Adrenal gland (tissue), 19 donors: ENCODE measurements at regions of chr2 and their contacts with region 1.

Region 1: GRCh38 chr2:9333591-9334171 is 89.6 kb downstream of the ITGB1BP1 start:
- DNase-seq: peak; percentile 58 to 82 (median 72)
- H3K4me3 ChIP-seq: no peak overlapping the region
- H3K27ac ChIP-seq: no peak overlapping the region
- H3K4me1 ChIP-seq: no peaks in the 10 kb centered on the region
- H3K27me3 ChIP-seq: no peaks in the 10 kb centered on the region
- CTCF ChIP-seq: peak; percentile 41 to 74 (median 66)
- POLR2A ChIP-seq: no peak

Region 2: GRCh38 chr2:9142551-9143263 is 191.0 kb before region 1 on chr2:
- intact Hi-C with region 1: loop called (anchors 5 kb)
- DNase-seq: peak; percentile 76 to 88 (median 83)
- H3K4me3 ChIP-seq: peak overlapping the region in 1 of 4 donors; percentile 18
- H3K27ac ChIP-seq: peak overlapping the region in 1 of 5 donors; percentile 24
- H3K4me1 ChIP-seq: peaks cover 0 to 6% of the 10 kb centered on the region in 2 donors
- H3K27me3 ChIP-seq: no peaks in the 10 kb centered on the region
- CTCF ChIP-seq: peak; percentile 94 to 100 (median 98)
- POLR2A ChIP-seq: no peak

Region 3: DNA sequence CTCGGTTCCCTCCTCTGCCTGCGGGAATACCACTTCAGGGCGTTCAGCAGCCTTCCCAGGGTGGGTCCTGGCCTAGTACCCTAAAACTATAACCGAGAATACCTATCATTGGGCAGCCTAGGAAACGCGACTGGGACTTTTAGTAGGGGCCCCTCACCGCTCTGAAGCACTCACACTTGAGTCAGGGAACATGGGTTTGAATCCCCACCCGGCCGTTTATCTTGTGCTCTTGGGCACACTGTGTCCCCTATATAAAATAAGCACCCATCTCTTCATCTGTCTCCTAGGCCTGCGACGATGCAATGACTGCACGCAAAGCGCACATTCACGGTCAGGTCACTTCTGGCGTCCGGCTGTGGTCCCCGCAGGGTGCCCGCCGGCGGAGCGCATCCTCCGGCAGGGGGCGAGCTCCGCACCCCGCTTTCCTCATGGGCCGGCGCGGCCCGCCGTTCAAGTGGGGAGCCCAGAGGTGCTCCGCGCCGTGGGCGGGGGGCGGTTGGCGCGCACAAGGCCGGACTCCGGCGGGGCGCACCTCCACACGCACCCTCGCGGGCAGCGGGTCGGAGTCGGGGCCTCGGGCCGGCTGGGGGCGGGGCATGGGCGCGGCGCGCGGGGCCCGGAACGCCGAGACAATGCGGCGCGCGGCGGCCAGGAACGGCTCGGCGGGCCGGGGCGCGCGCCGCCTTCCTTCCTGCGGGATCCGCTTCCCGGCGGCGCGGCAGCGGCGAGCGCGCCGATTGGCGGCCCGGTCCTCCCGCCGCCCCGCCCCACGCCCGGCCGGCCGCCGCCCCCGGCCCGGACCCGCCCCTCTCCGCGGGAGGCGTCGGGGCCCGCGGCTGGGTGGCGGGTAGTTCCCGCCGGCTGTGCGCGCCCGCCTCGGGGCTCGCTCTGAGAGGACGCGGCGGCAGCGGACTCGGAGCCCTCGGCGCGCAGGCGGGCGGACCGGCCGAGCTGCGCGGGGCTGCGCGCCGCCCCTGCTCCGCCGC is 127.4 kb before region 1 on chr2 and contains the start of gene ASAP2:
- intact Hi-C with region 1: loop called (anchors 10 kb)
- DNase-seq: peak; percentile 43 to 68 (median 61)
- H3K4me3 ChIP-seq: peak within 1 kb of the TSS in 3 of 4 donors; percentile 11 to 78 (median 32)
- H3K27ac ChIP-seq: peak within 1 kb of the TSS in 3 of 5 donors; percentile 19 to 91 (median 68)
- H3K4me1 ChIP-seq: peaks cover 5 to 7% of the 10 kb centered on the region in 2 donors
- H3K27me3 ChIP-seq: no peaks in the 10 kb centered on the region
- CTCF ChIP-seq: peak; percentile 24 to 78 (median 62)
- POLR2A ChIP-seq: peak in 1 of 2 donors; percentile 25
- total RNA-seq, gene ASAP2: 5.4 to 12.9 (median 7.7) TPM

Region 4: GRCh38 chr2:9251154-9252001 is 82.3 kb before region 1 on chr2:
- intact Hi-C with region 1: no loop called
- DNase-seq: peak in 2 of 7 donors; percentile 37 to 45
- H3K4me3 ChIP-seq: no peak overlapping the region
- H3K27ac ChIP-seq: peak overlapping the region in 2 of 5 donors; percentile 45 to 71
- H3K4me1 ChIP-seq: peaks cover 5 to 29% of the 10 kb centered on the region in 2 donors
- H3K27me3 ChIP-seq: no peaks in the 10 kb centered on the region
- CTCF ChIP-seq: no peak
- POLR2A ChIP-seq: no peak